ENCODE measurements at regions of chr5 and their contacts with region 1.

Region 1: DNA sequence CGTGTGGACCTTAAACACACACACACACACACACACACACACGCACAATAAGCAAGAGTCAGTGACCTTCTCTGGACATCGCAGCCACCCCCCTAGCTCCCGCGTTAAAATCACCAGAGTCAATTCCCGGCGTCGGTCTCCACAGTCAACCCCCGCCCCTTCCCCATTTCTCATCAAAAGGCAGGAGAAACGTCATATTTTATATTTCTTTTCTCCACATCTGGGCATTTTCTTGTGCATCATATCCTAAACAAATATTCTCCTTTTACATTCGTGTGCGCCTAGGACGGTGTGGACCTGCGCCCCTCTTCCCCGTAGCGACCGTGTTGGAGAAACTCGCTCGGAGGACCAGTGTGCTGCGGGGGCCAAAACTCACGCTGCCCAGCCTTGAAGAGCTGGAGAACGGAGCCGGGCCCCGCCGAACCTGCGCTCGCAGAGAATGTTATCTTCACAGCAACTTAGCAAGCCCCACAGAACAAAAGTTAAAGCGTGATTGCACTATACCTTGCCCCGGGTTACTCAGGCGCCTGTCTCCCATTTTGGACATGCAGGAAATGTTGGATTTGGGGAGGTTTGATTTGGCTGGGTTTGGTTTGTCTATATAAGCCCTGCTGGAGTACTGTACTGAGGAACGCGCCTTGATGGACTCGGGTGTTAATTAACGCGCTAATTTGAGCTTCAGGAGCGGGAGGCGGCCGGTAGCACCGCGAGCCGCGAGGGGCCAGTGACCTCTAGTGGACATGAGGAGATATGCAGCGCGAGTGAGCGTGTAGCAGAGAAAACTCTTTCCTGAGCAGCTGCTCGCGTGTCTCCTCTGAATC is 192.4 kb downstream of the MEF2C start:
- DNase-seq: peak in 8 of 9 donors; percentile 35 to 71 (median 66)
- ATAC-seq: peak; percentile 90
- H3K4me3 ChIP-seq: no peak overlapping the region
- H3K4me3 Mint-ChIP-seq: peak overlapping the region; percentile 61 to 81 (median 72)
- H3K27ac ChIP-seq: no peak overlapping the region
- H3K27ac Mint-ChIP-seq: peak overlapping the region in 7 of 9 donors; percentile 12 to 88 (median 39)
- H3K4me1 ChIP-seq: peaks cover 7 to 14% of the 10 kb centered on the region in 2 donors
- H3K4me1 Mint-ChIP-seq: peaks cover 11 to 32% (median 19%) of the 10 kb centered on the region in 7 donors
- H3K27me3 ChIP-seq: peaks cover 38 to 56% of the 10 kb centered on the region in 2 donors
- H3K27me3 Mint-ChIP-seq: peaks cover 87 to 93% (median 91%) of the 10 kb centered on the region in 5 donors

Region 2: GRCh38 chr5:86880785-86881492 is 1809.7 kb before region 1 on chr5:
- CTCF ChIA-PET with region 1: no interaction called
- POLR2A ChIA-PET with region 1: no interaction called
- intact Hi-C with region 1: loop called in 1 of 2 experiments (anchors 1 kb)
- DNase-seq: peak in 8 of 9 donors; percentile 11 to 45 (median 28)
- ATAC-seq: peak; percentile 86
- H3K4me3 ChIP-seq: no peak overlapping the region
- H3K4me3 Mint-ChIP-seq: no peak overlapping the region
- H3K27ac ChIP-seq: no peak overlapping the region
- H3K27ac Mint-ChIP-seq: no peak overlapping the region
- H3K4me1 ChIP-seq: no peaks in the 10 kb centered on the region
- H3K4me1 Mint-ChIP-seq: no peaks in the 10 kb centered on the region
- H3K27me3 ChIP-seq: no peaks in the 10 kb centered on the region
- H3K27me3 Mint-ChIP-seq: peaks cover 0 to 19% (median 7%) of the 10 kb centered on the region in 5 donors

Region 3: GRCh38 chr5:87421307-87421706 is 1269.3 kb before region 1 on chr5:
- CTCF ChIA-PET with region 1: no interaction called
- POLR2A ChIA-PET with region 1: no interaction called
- intact Hi-C with region 1: loop called in 1 of 2 experiments (anchors 5 kb)
- DNase-seq: no peak
- ATAC-seq: no peak
- H3K4me3 ChIP-seq: no peak overlapping the region
- H3K4me3 Mint-ChIP-seq: no peak overlapping the region
- H3K27ac ChIP-seq: no peak overlapping the region
- H3K27ac Mint-ChIP-seq: no peak overlapping the region
- H3K4me1 ChIP-seq: no peaks in the 10 kb centered on the region
- H3K4me1 Mint-ChIP-seq: no peaks in the 10 kb centered on the region
- H3K27me3 ChIP-seq: no peaks in the 10 kb centered on the region
- H3K27me3 Mint-ChIP-seq: peaks cover 0 to 3% (median 0%) of the 10 kb centered on the region in 5 donors

Region 4: DNA sequence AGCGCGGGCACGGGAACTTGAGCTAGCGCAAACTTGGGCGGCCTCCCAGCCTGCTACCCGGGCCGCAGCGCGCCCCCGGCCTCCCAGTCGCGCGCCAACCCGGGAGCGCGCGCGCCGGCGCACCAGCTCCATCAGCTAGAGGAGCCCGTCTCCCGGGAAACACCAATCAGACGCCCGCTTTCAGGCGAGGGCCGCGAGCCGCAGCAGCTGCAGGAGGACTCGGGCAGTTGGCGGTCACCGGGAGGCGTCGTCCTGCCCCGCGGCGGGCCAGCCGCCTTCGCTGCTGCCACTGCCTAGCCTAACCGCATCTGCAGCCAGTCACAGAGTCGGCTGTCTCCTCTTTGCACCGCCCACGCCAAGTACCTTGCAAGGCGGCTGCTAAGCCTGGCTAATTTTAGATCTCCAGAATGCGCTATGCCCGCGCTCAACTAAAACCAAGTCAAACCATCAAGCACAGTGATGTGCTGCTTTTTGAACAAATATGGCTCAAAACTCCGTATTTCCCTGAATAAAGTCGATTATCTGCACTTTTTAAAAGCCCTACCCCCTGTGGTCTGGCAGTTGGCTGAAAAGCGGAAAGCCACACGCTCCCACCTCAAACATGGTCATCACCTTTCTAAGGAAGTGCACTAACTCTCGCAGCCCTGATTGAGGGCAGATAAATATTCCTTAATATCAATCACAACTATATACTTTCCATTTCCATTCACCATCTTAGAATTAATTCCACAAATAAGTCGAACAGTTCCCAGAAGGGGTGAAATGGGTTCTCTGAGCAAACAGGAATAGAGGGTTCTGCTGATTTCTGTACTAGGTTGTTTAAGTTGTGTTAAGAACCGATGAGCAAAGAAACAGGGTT is 29.4 kb before region 1 on chr5:
- CTCF ChIA-PET with region 1: interaction called, 3 read pairs
- POLR2A ChIA-PET with region 1: no interaction called
- intact Hi-C with region 1: loop called in 1 of 2 experiments (anchors 1 kb)
- DNase-seq: peak in 1 of 9 donors; percentile 57
- ATAC-seq: peak; percentile 38
- H3K4me3 ChIP-seq: peak overlapping the region; percentile 15
- H3K4me3 Mint-ChIP-seq: peak overlapping the region in 9 of 10 donors; percentile 43 to 82 (median 62)
- H3K27ac ChIP-seq: no peak overlapping the region
- H3K27ac Mint-ChIP-seq: peak overlapping the region in 2 of 9 donors; percentile 28 to 44
- H3K4me1 ChIP-seq: peaks cover 3 to 6% of the 10 kb centered on the region in 2 donors
- H3K4me1 Mint-ChIP-seq: peaks cover 6 to 23% (median 19%) of the 10 kb centered on the region in 7 donors
- H3K27me3 ChIP-seq: peaks cover 19 to 25% of the 10 kb centered on the region in 2 donors
- H3K27me3 Mint-ChIP-seq: peaks cover 69 to 82% (median 78%) of the 10 kb centered on the region in 5 donors

Region 5: DNA sequence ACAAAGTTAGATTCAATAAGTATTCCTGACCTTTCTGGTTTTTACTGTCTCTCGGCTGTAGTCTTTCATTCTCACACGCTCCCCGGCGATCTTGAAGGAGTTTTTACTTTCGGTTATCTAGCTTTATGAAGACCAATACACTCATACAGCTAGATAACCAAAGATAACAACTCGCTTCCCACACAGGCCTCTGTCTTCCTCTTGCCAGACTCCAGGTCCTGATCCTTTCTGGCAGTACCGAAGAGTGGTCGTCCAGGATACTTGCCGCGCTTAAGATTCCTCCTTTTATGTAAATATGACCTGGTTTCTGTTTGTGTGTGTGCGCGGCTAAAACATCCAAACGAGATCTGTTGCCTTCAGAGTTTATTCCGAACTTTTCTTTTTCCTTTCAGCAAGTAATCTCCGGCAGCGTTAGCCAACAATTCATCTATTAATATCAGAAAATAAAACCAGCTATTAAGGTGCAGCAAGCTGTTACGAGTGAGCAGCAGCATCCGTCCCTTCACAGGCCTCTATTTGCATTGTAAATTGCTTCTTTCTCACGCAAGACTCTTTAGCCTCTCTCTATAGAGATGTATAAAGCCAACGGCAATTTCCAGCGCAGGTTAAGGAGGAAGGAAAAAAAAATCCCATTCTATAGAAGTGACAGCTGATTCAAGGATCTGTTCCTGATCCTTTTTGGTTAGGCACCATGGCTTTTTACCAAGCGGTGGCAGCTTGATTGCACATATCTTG is 23.7 kb before region 1 on chr5:
- CTCF ChIA-PET with region 1: no interaction called
- POLR2A ChIA-PET with region 1: no interaction called
- intact Hi-C with region 1: loop called in 1 of 2 experiments (anchors 1 kb)
- DNase-seq: no peak
- ATAC-seq: no peak
- H3K4me3 ChIP-seq: peak overlapping the region; percentile 45
- H3K4me3 Mint-ChIP-seq: peak overlapping the region; percentile 75 to 88 (median 86)
- H3K27ac ChIP-seq: no peak overlapping the region
- H3K27ac Mint-ChIP-seq: peak overlapping the region in 3 of 9 donors; percentile 0 to 6 (median 3)
- H3K4me1 ChIP-seq: peaks cover 7 to 8% of the 10 kb centered on the region in 2 donors
- H3K4me1 Mint-ChIP-seq: peaks cover 11 to 34% (median 25%) of the 10 kb centered on the region in 7 donors
- H3K27me3 ChIP-seq: peaks cover 12 to 29% of the 10 kb centered on the region in 2 donors
- H3K27me3 Mint-ChIP-seq: peaks cover 92 to 98% (median 93%) of the 10 kb centered on the region in 5 donors

Region 6: DNA sequence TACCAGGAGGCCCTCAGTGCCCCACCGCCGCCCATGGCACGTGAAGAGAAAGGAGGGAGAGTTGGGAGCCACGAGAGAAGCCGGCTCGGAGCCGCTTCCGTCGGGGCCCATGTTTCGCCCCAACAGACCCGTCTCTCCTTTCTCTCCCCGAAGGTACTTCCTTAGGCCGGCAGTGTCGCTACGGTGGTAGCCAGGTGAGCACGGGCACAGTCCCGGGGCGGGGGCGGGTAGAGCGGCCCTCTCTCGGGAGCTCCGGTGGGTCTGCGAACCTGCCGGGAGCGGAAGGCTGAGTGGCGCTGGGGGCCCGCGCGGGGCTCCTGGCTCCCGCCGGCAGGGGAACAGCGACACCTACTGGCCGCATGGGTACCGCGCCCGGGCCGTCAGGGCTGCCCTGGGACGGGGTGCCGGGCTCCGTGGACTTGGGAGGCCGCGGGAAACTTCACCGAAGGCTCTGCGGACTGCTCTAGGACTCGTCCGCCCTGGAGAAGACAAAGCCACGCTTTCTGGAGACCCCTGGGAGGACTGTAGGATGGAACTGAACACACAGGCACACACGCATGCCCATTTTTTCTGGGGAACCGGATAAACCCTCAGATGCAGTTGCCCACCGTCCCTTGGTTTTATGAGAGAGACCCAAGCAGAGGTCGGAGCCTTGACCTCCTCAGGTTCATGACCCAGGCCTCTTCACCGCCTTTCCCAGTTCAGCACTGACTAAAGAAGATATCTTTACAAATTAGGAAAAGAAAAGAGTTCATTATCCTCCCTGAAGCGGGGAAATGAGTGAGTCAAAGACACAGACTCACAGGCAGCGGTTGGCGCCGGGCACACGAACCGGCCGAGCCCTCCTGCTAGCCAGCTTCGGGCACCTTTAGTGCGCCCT is 10.1 kb before region 1 on chr5:
- CTCF ChIA-PET with region 1: interaction called, 13 read pairs
- POLR2A ChIA-PET with region 1: no interaction called
- intact Hi-C with region 1: loop called (anchors 1 to 2 kb)
- DNase-seq: peak; percentile 53 to 87 (median 77)
- ATAC-seq: peak; percentile 93
- H3K4me3 ChIP-seq: peak overlapping the region; percentile 36
- H3K4me3 Mint-ChIP-seq: peak overlapping the region; percentile 30 to 65 (median 58)
- H3K27ac ChIP-seq: no peak overlapping the region
- H3K27ac Mint-ChIP-seq: peak overlapping the region in 2 of 9 donors; percentile 25 to 30
- H3K4me1 ChIP-seq: peaks cover 0 to 6% of the 10 kb centered on the region in 2 donors
- H3K4me1 Mint-ChIP-seq: peaks cover 15 to 37% (median 25%) of the 10 kb centered on the region in 7 donors
- H3K27me3 ChIP-seq: peaks cover 32 to 60% of the 10 kb centered on the region in 2 donors
- H3K27me3 Mint-ChIP-seq: peaks cover 78 to 92% (median 80%) of the 10 kb centered on the region in 5 donors

Region 7: GRCh38 chr5:88889189-88890069 is 198.8 kb after region 1 on chr5:
- CTCF ChIA-PET with region 1: no interaction called
- POLR2A ChIA-PET with region 1: no interaction called
- intact Hi-C with region 1: loop called in 1 of 2 experiments (anchors 2 kb)
- DNase-seq: no peak
- ATAC-seq: peak; percentile 54
- H3K4me3 ChIP-seq: no peak overlapping the region
- H3K4me3 Mint-ChIP-seq: peak overlapping the region in 2 of 10 donors; percentile 11 to 21
- H3K27ac ChIP-seq: no peak overlapping the region
- H3K27ac Mint-ChIP-seq: no peak overlapping the region
- H3K4me1 ChIP-seq: peaks cover 0 to 3% of the 10 kb centered on the region in 2 donors
- H3K4me1 Mint-ChIP-seq: peaks cover under 1 to 9% (median 3%) of the 10 kb centered on the region in 7 donors
- H3K27me3 ChIP-seq: peaks cover 0 to 2% of the 10 kb centered on the region in 2 donors
- H3K27me3 Mint-ChIP-seq: peaks cover 33 to 72% (median 51%) of the 10 kb centered on the region in 5 donors

Measured in naive thymus-derived CD4-positive, alpha-beta T cell (primary cell).